ENCODE measurements at regions of chr15 and their contacts with region 1.

Region 1: GRCh38 chr15:44215594-44215993 is 20.5 kb upstream of the FRMD5 start:
- DNase-seq: no peak
- ATAC-seq: no peak
- H3K4me3 ChIP-seq: no peak overlapping the region
- H3K27ac ChIP-seq: no peak overlapping the region
- H3K4me1 ChIP-seq: no peaks in the 10 kb centered on the region
- H3K27me3 ChIP-seq: peaks cover 0 to 30% (median 0%) of the 10 kb centered on the region in 3 donors
- CTCF ChIP-seq: no peak

Region 2: GRCh38 chr15:43881944-43882343 is 333.6 kb before region 1 on chr15:
- intact Hi-C with region 1: loop called in 1 of 2 experiments (anchors 10 kb)
- DNase-seq: no peak
- ATAC-seq: no peak
- H3K4me3 ChIP-seq: no peak overlapping the region
- H3K27ac ChIP-seq: no peak overlapping the region
- H3K4me1 ChIP-seq: no peaks in the 10 kb centered on the region
- H3K27me3 ChIP-seq: no peaks in the 10 kb centered on the region
- CTCF ChIP-seq: no peak

Region 3: DNA sequence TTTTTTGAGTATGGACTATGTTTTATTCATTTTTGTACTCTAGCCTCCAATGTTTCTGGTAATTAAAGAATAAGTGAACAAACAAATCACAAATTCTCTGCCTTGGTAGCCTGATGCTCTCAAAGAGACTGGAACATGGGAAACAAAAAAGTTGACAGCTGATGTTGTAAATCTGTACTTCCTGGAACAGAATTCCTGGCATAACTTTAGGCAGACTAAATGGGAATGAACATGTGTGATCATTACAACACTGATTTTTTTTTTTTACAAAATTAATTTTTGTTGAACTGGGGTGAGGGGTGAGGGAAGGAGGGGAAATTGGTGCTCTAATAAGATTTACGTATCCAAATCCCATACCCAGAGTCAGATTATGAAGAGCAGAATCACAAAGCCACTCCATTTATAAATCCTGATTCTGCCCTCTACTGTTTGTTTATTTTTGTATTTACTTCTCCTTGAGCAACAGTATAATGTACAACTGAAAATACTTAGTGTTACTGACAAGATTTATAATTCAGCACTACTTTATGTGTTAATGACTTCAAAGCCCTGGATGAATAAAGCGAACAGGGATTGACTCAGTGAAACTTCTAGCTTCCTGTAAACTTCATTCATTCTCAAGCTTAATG is 185.5 kb before region 1 on chr15:
- intact Hi-C with region 1: no loop called
- DNase-seq: no peak
- ATAC-seq: no peak
- H3K4me3 ChIP-seq: no peak overlapping the region
- H3K27ac ChIP-seq: no peak overlapping the region
- H3K4me1 ChIP-seq: no peaks in the 10 kb centered on the region
- H3K27me3 ChIP-seq: no peaks in the 10 kb centered on the region
- CTCF ChIP-seq: no peak

Measured in psoas muscle (tissue), 8 donors.